Activated CD8-positive, alpha-beta T cell treated with anti-CD3 and anti-CD28 coated beads, Interleukin-2, amount 10 ng/mL, durations not matched to agents 7 days and 5 days (primary cell): ENCODE measurements at regions of chr1 and their contacts with region 1.

Region 1: GRCh38 chr1:221708987-221709386 is 32.9 kb downstream of the DUSP10 start:
- DNase-seq: peak; percentile 60
- ATAC-seq: peak; percentile 27
- H3K4me3 Mint-ChIP-seq: no peak overlapping the region
- H3K27ac Mint-ChIP-seq: peak overlapping the region; percentile 78
- H3K4me1 Mint-ChIP-seq: peaks cover 76% of the 10 kb centered on the region
- H3K27me3 Mint-ChIP-seq: no peaks in the 10 kb centered on the region

Region 2: DNA sequence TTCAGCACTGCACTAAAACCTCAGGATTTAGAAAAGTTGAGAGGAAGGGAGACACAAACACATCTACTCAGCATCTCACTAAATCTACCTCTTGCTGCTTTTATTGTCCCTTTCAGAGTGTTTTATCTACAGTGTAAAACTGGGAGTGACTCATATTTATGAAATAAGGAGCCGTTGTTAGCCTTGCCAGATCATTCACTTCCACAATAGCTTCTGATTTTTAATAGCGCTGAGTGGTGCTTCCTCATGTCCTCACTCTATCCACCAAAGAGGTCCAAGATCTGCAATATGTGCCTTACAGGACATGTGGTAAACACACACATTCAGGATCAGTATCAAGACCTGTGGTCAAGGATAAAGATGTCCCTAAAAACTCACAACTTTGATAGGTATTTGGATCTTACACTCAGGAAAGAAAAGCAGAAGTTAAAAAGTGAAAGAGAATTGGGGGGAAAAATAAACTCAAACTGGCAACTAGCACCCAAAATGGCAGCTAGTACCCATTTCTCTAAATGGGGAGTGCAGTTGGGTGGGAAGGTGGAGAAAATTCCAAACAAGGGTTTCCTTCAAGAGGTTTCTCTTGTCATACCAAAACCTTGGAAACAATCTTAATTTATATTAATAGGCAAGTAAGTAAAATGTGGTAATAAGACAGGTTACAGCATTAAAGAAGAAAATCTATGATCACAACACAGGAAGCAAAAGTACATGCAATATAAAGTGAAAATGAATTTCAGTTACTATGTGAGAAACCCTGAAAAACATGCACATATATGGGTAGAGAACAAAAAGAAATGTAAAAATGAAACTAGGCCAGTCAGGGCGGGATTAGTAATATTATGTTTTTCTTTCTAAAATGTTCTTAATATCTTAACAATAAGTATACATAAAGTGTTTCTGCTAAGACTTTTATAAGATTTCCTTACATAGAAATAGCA is 17.0 kb after region 1 on chr1:
- CTCF ChIA-PET with region 1: interaction called, 25 read pairs
- POLR2A ChIA-PET with region 1: interaction called, 21 read pairs
- DNase-seq: no peak
- ATAC-seq: peak; percentile 61
- H3K4me3 Mint-ChIP-seq: peak overlapping the region; percentile 52
- H3K27ac Mint-ChIP-seq: peak overlapping the region; percentile 59
- H3K4me1 Mint-ChIP-seq: peaks cover 70% of the 10 kb centered on the region
- H3K27me3 Mint-ChIP-seq: no peaks in the 10 kb centered on the region